ENCODE measurements at regions of chr2 and their contacts with region 1.

Region 1: DNA sequence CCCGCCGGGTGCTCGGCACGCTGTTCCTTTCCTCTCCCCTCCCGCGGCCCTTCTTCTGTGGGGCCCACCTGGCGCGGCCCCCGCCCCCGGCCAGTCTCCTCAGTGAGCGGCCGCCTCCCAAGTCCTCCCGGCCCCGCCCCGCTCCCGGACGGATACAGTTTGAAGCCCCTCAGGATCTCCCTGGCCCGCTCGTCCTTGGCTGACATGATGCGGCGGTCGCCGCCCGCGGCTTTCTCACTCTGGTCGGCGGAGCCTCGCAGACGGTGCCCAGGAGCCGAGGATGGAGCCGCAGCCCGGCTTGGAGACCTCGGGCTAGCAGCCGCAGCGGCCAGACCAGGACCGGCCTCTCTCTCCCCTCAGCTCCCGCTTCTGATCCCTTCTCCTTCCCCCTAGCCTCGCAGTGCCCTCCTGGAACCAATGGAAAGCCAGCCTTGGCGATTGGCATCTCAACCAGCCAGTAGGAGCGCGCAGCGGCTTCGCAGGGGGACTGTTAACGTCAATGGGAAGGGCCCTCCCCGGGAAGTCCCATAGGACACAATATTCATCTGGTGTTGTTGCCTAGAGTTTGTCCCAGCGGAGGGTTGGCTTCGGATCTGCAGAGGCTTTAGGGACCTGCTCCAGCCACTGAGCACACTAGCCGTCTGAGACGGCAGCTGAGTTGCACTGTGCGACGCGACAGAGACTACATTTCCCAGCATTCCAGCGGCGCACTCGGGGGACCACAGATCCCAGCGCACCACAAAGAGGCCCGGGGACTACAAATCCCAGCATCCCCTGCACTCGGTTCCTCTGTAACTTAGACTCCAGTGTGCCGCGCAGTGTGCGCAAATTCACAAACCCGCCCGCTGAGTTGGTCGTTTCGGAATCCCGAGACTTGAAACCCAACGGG is at the start of gene PDE6D:
- DNase-seq: peak; percentile 97
- H3K4me3 Mint-ChIP-seq: peak within 1 kb of the TSS; percentile 97
- H3K27ac Mint-ChIP-seq: peak within 1 kb of the TSS; percentile 93
- H3K4me1 Mint-ChIP-seq: peaks cover 45% of the 10 kb centered on the region
- H3K27me3 Mint-ChIP-seq: no peaks in the 10 kb centered on the region
- total RNA-seq, gene PDE6D: 35.5 and 35.6 TPM in 2 replicates

Region 2: DNA sequence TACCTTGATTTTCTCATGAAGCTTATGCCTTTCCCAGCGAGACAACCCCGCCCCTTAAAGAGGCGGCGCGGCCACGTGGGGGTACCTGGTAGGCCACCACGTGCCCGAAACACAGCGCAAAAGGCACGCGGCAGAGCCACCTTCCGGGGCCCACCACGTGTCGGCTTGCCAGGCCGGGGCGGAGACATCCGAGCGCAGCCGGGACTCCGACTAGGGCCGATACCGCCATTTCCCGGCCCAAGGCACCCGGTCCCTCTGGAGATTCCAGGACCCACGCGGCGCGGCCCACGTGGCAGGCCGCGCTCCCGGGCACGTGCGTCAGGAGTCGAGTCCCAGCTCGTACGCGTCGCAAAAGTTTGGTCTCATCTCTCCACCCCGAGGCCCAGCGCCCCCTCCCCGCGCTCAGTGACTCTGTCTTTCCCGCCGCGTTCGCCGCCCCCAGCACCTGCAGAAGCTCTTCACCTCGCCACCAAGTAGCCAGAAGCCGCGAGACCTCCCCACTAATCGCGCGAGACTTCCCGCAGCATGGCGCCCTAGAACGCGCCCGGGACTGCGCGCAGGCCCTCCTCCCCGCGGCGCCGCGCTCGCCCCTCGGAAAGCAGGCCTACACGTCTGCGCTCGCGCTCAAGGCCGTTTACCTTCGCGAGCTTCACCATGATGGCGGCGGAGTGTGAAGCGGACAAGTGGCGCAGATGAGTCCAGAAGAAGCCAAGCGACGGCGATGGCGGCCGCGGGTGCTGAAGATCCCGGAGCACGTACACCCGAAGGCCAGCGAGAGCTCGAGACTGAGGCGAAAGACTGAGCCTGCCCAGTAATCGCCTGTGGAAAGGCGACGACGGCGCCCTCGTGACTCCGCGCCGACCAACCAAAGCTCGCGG is 317.2 kb before region 1 on chr2 and contains the start of gene NCL:
- intact Hi-C with region 1: loop called (anchors 5 kb)
- DNase-seq: peak; percentile 83
- H3K4me3 Mint-ChIP-seq: peak within 1 kb of the TSS; percentile 94
- H3K27ac Mint-ChIP-seq: peak within 1 kb of the TSS; percentile 98
- H3K4me1 Mint-ChIP-seq: peaks cover 31% of the 10 kb centered on the region
- H3K27me3 Mint-ChIP-seq: no peaks in the 10 kb centered on the region
- total RNA-seq, gene NCL: 1,292 and 1,329 TPM in 2 replicates

Region 3: GRCh38 chr2:231545105-231545902 is 235.8 kb before region 1 on chr2:
- intact Hi-C with region 1: no loop called
- DNase-seq: peak; percentile 78
- H3K4me3 Mint-ChIP-seq: peak overlapping the region; percentile 78
- H3K27ac Mint-ChIP-seq: peak overlapping the region; percentile 99
- H3K4me1 Mint-ChIP-seq: peaks cover 40% of the 10 kb centered on the region
- H3K27me3 Mint-ChIP-seq: peaks cover 8% of the 10 kb centered on the region

Region 4: GRCh38 chr2:231604685-231605606 is 176.2 kb before region 1 on chr2:
- intact Hi-C with region 1: loop called (anchors 2 kb)
- DNase-seq: peak; percentile 93
- H3K4me3 Mint-ChIP-seq: peak overlapping the region; percentile 62
- H3K27ac Mint-ChIP-seq: peak overlapping the region; percentile 66
- H3K4me1 Mint-ChIP-seq: peaks cover 3% of the 10 kb centered on the region
- H3K27me3 Mint-ChIP-seq: peaks cover 3% of the 10 kb centered on the region

Region 5: GRCh38 chr2:231662028-231662810 is 118.9 kb before region 1 on chr2:
- intact Hi-C with region 1: loop called (anchors 1 kb)
- DNase-seq: peak; percentile 98
- H3K4me3 Mint-ChIP-seq: peak overlapping the region; percentile 56
- H3K27ac Mint-ChIP-seq: peak overlapping the region; percentile 93
- H3K4me1 Mint-ChIP-seq: peaks cover 14% of the 10 kb centered on the region
- H3K27me3 Mint-ChIP-seq: no peaks in the 10 kb centered on the region

Region 6: DNA sequence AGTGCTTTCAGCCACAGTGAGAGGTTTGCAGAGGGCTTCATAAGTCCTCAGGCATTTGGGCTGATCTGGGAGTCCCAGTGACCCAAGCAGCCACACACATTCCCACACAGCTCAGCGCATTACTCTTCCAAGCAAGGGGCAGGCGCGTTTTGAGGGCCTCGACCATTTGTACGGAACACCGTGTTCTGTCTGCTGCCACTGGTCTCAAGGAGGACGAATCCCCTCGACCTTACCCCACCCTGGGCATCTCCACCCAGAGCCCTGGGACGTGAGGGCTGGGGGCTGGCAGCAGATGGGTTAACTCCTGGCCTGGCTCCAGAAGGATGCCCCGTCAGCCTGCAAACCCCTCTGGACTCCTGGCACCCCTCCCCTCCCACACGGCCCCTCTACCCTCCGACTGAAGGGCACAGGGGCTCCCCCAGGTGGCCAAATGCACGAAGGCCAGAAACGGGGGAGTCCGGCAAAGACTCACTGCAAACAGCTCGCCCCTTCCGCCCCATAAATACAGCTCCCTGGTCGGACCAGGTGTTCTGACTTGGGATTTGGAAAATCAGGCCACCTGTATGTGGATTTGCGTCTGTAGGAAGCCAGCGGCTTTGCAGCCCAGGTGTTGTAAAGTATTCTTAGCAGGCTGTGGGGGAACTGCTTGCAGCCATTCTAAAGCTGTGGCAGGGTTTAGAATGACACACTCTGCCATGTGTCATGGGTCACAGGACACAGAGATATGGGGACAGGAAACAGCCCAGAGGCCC is 106.4 kb before region 1 on chr2:
- intact Hi-C with region 1: loop called (anchors 2 kb)
- DNase-seq: peak; percentile 52
- H3K4me3 Mint-ChIP-seq: no peak overlapping the region
- H3K27ac Mint-ChIP-seq: peak overlapping the region; percentile 65
- H3K4me1 Mint-ChIP-seq: peaks cover 16% of the 10 kb centered on the region
- H3K27me3 Mint-ChIP-seq: no peaks in the 10 kb centered on the region

Region 7: DNA sequence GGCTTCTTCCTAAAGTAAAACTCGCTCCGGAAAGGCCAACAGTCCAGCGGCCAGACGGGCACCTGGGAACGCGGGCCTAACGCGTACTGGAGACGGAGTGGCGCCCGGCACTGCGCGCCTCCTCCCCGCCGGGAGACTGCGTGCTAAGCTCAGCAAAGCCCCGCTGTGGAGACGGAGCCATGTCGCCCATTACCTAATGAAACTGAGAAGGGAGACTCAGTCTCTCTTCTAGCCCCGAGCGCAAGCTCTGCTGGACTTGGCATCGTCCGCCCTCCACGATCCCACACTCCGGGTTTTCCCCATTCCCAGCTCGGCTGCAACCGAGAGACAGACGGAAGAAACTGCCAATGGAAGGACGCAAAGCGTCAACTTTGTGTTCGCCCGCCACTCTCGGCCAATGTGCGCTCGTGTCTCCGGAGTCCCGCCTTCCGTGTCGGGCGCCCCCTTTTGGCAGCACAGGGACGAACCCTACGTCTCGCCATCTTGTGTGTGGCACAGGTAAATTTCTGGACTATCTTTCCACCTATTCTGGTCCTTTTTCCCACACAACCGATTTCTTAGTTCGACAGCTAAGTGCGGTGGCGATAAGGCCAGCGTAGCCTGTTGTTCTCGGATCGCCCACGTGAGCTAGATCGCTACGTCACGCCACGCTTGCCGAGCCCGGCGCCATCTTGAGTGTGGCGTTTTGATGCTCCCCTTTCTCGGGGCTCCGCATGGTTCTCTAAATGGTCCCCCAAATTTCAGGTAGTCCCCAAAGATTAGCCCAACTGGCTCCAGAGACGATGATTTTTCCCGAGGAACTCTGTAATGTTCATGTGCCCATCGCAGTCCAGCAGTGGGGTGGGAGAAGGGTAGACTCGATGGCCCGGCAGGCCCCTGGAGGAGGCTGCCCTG is 74.2 kb before region 1 on chr2:
- intact Hi-C with region 1: loop called (anchors 1 kb)
- DNase-seq: peak; percentile 97
- H3K4me3 Mint-ChIP-seq: peak overlapping the region; percentile 94
- H3K27ac Mint-ChIP-seq: peak overlapping the region; percentile 100
- H3K4me1 Mint-ChIP-seq: peaks cover 13% of the 10 kb centered on the region
- H3K27me3 Mint-ChIP-seq: no peaks in the 10 kb centered on the region

Region 8: GRCh38 chr2:232126301-232127099 is 345.3 kb after region 1 on chr2:
- intact Hi-C with region 1: no loop called
- DNase-seq: no peak
- H3K4me3 Mint-ChIP-seq: no peak overlapping the region
- H3K27ac Mint-ChIP-seq: no peak overlapping the region
- H3K4me1 Mint-ChIP-seq: no peaks in the 10 kb centered on the region
- H3K27me3 Mint-ChIP-seq: no peaks in the 10 kb centered on the region

Measured in activated T-helper 2 cell treated with anti-CD3 and anti-CD28 coated beads, Interferon-gamma antibody, Interleukin-2, Interleukin-4, amounts not matched to agents 10 μg/mL and 5 μg/mL and 100 μg/mL, durations not matched to agents 14 hours and 24 hours and 36 hours (primary cell).